ENCODE measurements at regions of chr11 and their contacts with region 1.

Region 1: DNA sequence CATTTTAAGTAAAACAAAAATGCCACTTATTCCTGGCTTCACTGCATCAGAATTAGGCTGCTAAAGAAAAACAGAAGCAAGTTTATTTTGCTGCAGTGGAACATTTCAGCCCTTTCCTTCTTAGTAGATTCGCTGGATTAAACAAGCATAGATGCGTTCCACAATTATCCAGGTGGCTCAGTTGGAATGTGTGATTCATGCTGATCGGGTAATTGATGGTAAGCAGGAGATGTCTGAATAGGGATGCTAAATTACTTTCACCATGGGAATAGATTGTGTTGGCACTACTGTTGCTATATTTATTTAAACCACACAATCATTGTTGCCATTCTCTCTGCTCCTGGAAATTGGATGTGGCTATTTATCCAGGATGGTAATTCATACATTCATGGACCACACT is 440.1 kb upstream of the DDI1 start:
- DNase-seq: no peak
- ATAC-seq: no peak
- H3K4me3 ChIP-seq: no peak overlapping the region
- H3K27ac ChIP-seq: no peak overlapping the region
- H3K4me1 ChIP-seq: no peaks in the 10 kb centered on the region
- H3K27me3 ChIP-seq: no peaks in the 10 kb centered on the region
- CTCF ChIP-seq: no peak

Region 2: GRCh38 chr11:103326070-103326794 is 270.1 kb before region 1 on chr11:
- intact Hi-C with region 1: loop called in 1 of 2 experiments (anchors 5 kb)
- DNase-seq: peak in 2 of 4 donors; percentile 18 to 48
- ATAC-seq: peak; percentile 98
- H3K4me3 ChIP-seq: no peak overlapping the region
- H3K27ac ChIP-seq: no peak overlapping the region
- H3K4me1 ChIP-seq: no peaks in the 10 kb centered on the region
- H3K27me3 ChIP-seq: no peaks in the 10 kb centered on the region
- CTCF ChIP-seq: peak; percentile 45 to 50

Region 3: DNA sequence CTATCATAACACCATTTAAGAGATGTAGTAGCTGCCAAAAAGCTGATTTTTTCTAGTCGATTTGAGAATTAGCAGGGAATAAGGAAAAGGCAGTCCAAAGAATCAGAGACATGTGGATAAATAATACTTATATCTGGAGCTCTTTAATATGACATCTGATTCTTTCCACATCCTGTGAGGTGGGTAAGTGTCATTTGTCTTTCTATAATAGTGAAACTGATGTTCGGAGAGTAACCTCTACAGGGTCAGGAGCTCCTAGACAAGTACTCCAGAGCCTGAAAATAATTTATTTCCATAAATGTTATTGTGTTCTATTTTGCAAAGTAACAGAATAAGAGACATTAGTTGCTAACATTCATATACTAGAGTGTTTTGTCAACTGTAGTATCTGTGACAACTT is 119.4 kb before region 1 on chr11:
- intact Hi-C with region 1: no loop called
- DNase-seq: no peak
- ATAC-seq: no peak
- H3K4me3 ChIP-seq: no peak overlapping the region
- H3K27ac ChIP-seq: no peak overlapping the region
- H3K4me1 ChIP-seq: no peaks in the 10 kb centered on the region
- H3K27me3 ChIP-seq: no peaks in the 10 kb centered on the region
- CTCF ChIP-seq: no peak

Region 4: DNA sequence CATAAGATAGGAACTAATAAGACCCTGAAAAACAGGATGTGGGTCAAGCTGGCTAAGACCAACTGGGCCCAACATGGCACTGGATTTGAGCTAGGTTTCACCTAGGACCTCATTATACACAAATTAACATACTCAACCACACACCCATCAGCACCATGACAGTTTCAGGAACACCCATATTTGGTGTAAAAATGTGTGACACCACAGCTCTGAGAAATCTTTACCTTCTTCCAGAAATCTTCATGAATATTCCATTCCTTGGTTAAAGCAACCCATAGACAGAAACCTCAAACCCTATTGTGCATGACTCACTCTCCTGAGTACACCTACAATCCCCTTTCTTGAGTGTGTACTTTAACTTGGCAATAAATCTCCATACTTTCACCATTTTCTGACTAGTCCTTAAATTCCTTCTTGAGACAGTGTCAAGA is 108.3 kb before region 1 on chr11:
- intact Hi-C with region 1: no loop called
- DNase-seq: no peak
- ATAC-seq: peak; percentile 62
- H3K4me3 ChIP-seq: no peak overlapping the region
- H3K27ac ChIP-seq: no peak overlapping the region
- H3K4me1 ChIP-seq: no peaks in the 10 kb centered on the region
- H3K27me3 ChIP-seq: no peaks in the 10 kb centered on the region
- CTCF ChIP-seq: no peak

Region 5: GRCh38 chr11:104422315-104422944 is 826.1 kb after region 1 on chr11:
- intact Hi-C with region 1: no loop called
- DNase-seq: peak in 1 of 4 donors; percentile 77
- ATAC-seq: no peak
- H3K4me3 ChIP-seq: no peak overlapping the region
- H3K27ac ChIP-seq: no peak overlapping the region
- H3K4me1 ChIP-seq: no peaks in the 10 kb centered on the region
- H3K27me3 ChIP-seq: no peaks in the 10 kb centered on the region
- CTCF ChIP-seq: no peak

Measured in left lung (tissue), 14 donors.